CD4-positive, alpha-beta T cell (primary cell): ENCODE measurements at regions of chr6 and their contacts with region 1.

Region 1: DNA sequence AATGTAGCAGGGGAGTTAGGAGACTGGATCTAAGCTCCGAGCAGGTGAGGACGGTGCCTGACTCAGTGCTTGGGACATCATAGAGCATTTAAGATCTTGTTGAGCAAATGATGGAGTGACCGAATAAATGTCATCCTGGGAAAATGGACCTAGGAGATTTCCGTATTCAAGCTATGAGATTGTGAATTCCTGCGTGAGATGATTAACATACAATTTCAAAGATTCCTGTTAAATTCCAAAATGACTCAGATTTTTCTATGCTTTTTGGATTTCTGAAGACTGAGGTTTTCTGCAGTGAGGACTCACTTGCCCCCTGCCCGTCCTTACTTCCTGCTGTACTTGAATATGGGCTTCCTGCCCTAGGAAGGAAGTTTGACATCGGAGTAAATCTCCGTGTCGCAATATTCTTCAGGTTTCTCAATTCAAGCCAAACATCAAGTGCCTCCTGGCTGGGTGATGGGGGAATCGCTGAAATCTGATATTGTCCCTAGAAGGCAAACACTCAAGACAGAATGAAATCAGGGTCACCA is 5.2 kb downstream of the SYTL3 start:
- DNase-seq: peak in 4 of 14 experiments; percentile 38 to 70 (median 62)
- ATAC-seq: no peak
- H3K4me3 ChIP-seq: no peak overlapping the region
- H3K4me3 Mint-ChIP-seq: peak overlapping the region; percentile 78
- H3K27ac ChIP-seq: peak overlapping the region; percentile 87 to 89
- H3K27ac Mint-ChIP-seq: peak overlapping the region; percentile 97
- H3K4me1 ChIP-seq: peaks cover 67% of the 10 kb centered on the region
- H3K4me1 Mint-ChIP-seq: peaks cover 66% of the 10 kb centered on the region
- H3K27me3 ChIP-seq: no peaks in the 10 kb centered on the region
- H3K27me3 Mint-ChIP-seq: no peaks in the 10 kb centered on the region
- CTCF ChIP-seq: no peak

Region 2: DNA sequence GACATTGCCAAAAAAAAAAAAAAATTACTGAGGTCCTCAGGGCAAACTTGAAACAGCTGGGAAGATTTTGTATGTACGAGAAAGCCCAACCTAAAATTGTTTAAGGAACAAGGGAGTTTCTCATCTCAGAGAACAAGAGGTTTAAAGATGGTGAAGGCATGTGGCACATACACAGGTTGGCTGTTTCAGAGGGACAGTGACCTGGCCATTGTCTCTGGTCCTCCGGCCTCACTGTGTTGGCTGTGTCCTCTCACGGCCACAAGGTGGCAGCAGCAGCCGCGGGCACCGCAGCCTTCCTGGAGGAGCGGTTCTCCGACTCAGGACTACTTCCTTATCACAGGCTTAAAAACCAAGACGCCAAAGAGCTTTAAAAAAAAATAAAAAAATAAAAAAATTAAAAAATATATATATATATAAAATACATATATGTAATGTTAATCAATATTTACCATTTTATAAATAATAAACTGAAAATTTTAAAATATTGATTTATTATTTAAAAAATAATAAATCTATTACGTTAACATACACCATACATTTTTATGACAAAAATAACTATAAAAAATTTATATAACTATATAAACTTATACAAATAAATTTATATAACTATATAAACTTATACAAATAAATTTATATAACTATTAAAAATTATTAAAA is 434.1 kb before region 1 on chr6:
- CTCF ChIA-PET with region 1: no interaction called
- POLR2A ChIA-PET with region 1: no interaction called
- intact Hi-C with region 1: no loop called
- DNase-seq: peak; percentile 44 to 87 (median 66)
- ATAC-seq: peak; percentile 74
- H3K4me3 ChIP-seq: no peak overlapping the region
- H3K4me3 Mint-ChIP-seq: no peak overlapping the region
- H3K27ac ChIP-seq: no peak overlapping the region
- H3K27ac Mint-ChIP-seq: no peak overlapping the region
- H3K4me1 ChIP-seq: peaks cover 2% of the 10 kb centered on the region
- H3K4me1 Mint-ChIP-seq: peaks cover 3% of the 10 kb centered on the region
- H3K27me3 ChIP-seq: no peaks in the 10 kb centered on the region
- H3K27me3 Mint-ChIP-seq: no peaks in the 10 kb centered on the region
- CTCF ChIP-seq: peak; percentile 92

Region 3: GRCh38 chr6:158694913-158695312 is 39.9 kb after region 1 on chr6:
- CTCF ChIA-PET with region 1: interaction called, 52 read pairs
- POLR2A ChIA-PET with region 1: interaction called, 9 read pairs
- intact Hi-C with region 1: loop called (anchors 1 to 5 kb)
- DNase-seq: no peak
- ATAC-seq: no peak
- H3K4me3 ChIP-seq: no peak overlapping the region
- H3K4me3 Mint-ChIP-seq: no peak overlapping the region
- H3K27ac ChIP-seq: no peak overlapping the region
- H3K27ac Mint-ChIP-seq: no peak overlapping the region
- H3K4me1 ChIP-seq: peaks cover 13% of the 10 kb centered on the region
- H3K4me1 Mint-ChIP-seq: peaks cover 5% of the 10 kb centered on the region
- H3K27me3 ChIP-seq: no peaks in the 10 kb centered on the region
- H3K27me3 Mint-ChIP-seq: no peaks in the 10 kb centered on the region
- CTCF ChIP-seq: no peak